Caco-2 (cell line): ENCODE measurements at regions of chr12 and their contacts with region 1.

Region 1: DNA sequence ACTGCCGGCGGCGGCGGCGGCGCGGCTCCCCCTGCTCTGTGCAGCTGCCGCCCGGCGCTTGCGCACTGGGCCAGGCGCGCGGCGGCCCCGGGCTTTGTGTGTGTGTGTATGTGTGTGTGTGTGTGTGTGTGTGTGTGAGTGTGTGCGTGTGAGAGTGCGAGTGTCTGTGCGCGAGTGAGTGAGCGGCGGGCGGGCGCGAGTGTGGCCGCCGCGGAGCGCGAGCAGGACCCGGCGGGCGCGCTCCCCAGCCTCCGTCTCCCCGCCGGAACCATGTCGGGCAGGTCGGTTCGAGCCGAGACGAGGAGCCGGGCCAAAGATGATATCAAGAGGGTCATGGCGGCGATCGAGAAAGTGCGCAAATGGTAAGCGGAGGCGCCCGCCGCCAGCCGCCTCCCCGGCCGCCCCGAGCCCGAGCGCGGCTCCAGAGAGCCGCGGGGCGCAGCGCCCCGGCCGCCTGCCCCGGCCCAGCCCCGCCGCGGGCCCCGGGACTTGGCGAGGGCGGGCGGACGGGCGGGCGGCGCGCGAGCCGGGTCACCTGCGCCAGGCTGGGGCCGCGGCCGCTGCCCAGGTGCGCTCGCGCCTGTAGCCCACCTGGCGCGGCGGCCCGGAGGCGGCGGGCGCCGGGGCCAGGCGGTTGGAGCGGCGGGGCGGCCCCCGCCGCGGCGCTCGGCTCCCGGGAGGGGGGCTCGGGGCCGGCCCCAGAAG is at the start of gene BCL7A:
- DNase-seq: peak; percentile 63 to 72
- H3K4me3 ChIP-seq: peak within 1 kb of the TSS; percentile 65
- H3K4me3 Mint-ChIP-seq: peak within 1 kb of the TSS; percentile 86
- H3K27ac Mint-ChIP-seq: peak within 1 kb of the TSS; percentile 72
- H3K4me1 ChIP-seq: peaks cover 10% of the 10 kb centered on the region
- H3K4me1 Mint-ChIP-seq: no peaks in the 10 kb centered on the region
- H3K27me3 ChIP-seq: no peaks in the 10 kb centered on the region
- H3K27me3 Mint-ChIP-seq: no peaks in the 10 kb centered on the region
- CTCF ChIP-seq: no peak
- total RNA-seq, gene BCL7A: 13.0 and 15.5 TPM in 2 replicates

Region 2: GRCh38 chr12:121968876-121969275 is 53.1 kb before region 1 on chr12:
- CTCF ChIA-PET with region 1: no interaction called
- POLR2A ChIA-PET with region 1: no interaction called
- intact Hi-C with region 1: no loop called
- DNase-seq: no peak
- H3K4me3 ChIP-seq: no peak overlapping the region
- H3K4me3 Mint-ChIP-seq: no peak overlapping the region
- H3K27ac Mint-ChIP-seq: no peak overlapping the region
- H3K4me1 ChIP-seq: no peaks in the 10 kb centered on the region
- H3K4me1 Mint-ChIP-seq: no peaks in the 10 kb centered on the region
- H3K27me3 ChIP-seq: no peaks in the 10 kb centered on the region
- H3K27me3 Mint-ChIP-seq: no peaks in the 10 kb centered on the region
- CTCF ChIP-seq: no peak

Region 3: DNA sequence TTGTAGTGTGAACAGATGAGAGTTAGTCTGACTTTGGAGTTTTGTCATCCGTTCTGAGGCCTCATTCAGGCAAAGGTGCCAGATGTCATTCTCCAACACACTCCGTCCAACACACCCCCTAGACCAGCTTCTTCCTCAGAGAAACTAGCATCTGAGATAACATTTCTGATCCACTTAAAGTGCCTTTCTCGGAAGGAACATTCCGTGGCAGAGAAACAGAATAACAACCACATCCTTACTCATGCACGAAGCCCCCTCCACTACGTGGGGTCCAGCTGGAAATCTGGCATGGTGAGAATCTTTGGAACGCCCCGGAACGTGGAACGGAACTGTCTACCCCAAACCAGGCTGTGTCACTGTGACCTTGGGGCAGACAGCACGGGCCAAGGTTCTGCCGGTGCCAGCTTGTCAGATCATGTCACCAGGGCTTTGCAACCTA is 17.3 kb before region 1 on chr12:
- CTCF ChIA-PET with region 1: no interaction called
- POLR2A ChIA-PET with region 1: no interaction called
- intact Hi-C with region 1: no loop called
- DNase-seq: no peak
- H3K4me3 ChIP-seq: no peak overlapping the region
- H3K4me3 Mint-ChIP-seq: no peak overlapping the region
- H3K27ac Mint-ChIP-seq: no peak overlapping the region
- H3K4me1 ChIP-seq: no peaks in the 10 kb centered on the region
- H3K4me1 Mint-ChIP-seq: no peaks in the 10 kb centered on the region
- H3K27me3 ChIP-seq: no peaks in the 10 kb centered on the region
- H3K27me3 Mint-ChIP-seq: no peaks in the 10 kb centered on the region
- CTCF ChIP-seq: no peak

Region 4: GRCh38 chr12:122040579-122041386 is 18.8 kb after region 1 on chr12:
- CTCF ChIA-PET with region 1: interaction called, 3 read pairs
- POLR2A ChIA-PET with region 1: no interaction called
- intact Hi-C with region 1: loop called (anchors 2 kb)
- DNase-seq: peak; percentile 80 to 84
- H3K4me3 ChIP-seq: no peak overlapping the region
- H3K4me3 Mint-ChIP-seq: peak overlapping the region; percentile 27
- H3K27ac Mint-ChIP-seq: peak overlapping the region; percentile 72
- H3K4me1 ChIP-seq: peaks cover 13% of the 10 kb centered on the region
- H3K4me1 Mint-ChIP-seq: peaks cover 9% of the 10 kb centered on the region
- H3K27me3 ChIP-seq: no peaks in the 10 kb centered on the region
- H3K27me3 Mint-ChIP-seq: no peaks in the 10 kb centered on the region
- CTCF ChIP-seq: no peak